Activated CD8-positive, alpha-beta T cell treated with anti-CD3 and anti-CD28 coated beads for 36 hours (primary cell): ENCODE measurements at regions of chr14 and their contacts with region 1.

Region 1: GRCh38 chr14:22852940-22853767 is 16.8 kb downstream of the MMP14 start:
- DNase-seq: peak; percentile 96
- ATAC-seq: peak; percentile 82
- H3K4me3 Mint-ChIP-seq: peak overlapping the region; percentile 71
- H3K27ac Mint-ChIP-seq: peak overlapping the region; percentile 79
- H3K4me1 Mint-ChIP-seq: peaks cover 15% of the 10 kb centered on the region
- H3K27me3 Mint-ChIP-seq: peaks cover 13% of the 10 kb centered on the region
- CTCF ChIP-seq: peak; percentile 92

Region 2: DNA sequence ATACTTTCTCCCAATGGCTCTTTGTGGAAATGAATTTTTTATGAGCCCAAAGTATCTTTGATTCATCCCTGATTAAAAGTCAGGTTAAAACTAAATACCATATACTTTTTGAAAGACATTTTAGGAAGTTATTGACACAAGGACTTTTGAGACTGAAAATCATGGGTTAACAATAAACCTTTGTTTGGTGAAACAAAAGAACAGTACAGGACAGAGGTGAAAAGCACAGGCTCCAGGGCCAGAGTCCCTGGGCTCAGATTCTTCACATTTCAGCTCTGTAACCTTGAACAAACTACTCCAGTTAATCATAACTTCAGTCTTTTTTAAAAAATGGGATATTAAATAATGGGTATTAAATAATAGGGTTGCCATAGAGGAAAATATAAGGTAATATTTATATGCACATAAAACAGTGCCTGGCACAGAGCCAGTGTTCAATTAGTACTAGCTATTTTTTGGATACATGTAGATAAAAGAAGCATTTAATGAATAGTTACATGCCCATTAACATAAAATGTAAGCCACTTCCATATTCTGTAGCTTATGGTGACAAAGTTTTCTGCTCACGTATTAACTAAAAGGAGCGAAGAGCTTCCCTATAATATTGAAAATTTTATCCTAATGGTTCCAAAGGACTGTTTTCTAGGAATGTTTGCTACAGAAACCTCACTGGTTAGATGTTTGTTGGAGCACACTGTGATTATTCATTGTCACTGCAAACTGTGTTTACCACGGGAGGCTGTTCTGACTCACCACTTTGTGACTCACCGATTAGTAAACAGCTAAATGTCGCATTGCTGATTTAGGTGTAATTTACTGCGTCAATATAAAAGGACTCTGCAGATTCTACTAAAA is 519.5 kb before region 1 on chr14:
- CTCF ChIA-PET with region 1: no interaction called
- POLR2A ChIA-PET with region 1: no interaction called
- intact Hi-C with region 1: no loop called
- DNase-seq: no peak
- ATAC-seq: no peak
- H3K4me3 Mint-ChIP-seq: no peak overlapping the region
- H3K27ac Mint-ChIP-seq: no peak overlapping the region
- H3K4me1 Mint-ChIP-seq: no peaks in the 10 kb centered on the region
- H3K27me3 Mint-ChIP-seq: no peaks in the 10 kb centered on the region
- CTCF ChIP-seq: no peak

Region 3: DNA sequence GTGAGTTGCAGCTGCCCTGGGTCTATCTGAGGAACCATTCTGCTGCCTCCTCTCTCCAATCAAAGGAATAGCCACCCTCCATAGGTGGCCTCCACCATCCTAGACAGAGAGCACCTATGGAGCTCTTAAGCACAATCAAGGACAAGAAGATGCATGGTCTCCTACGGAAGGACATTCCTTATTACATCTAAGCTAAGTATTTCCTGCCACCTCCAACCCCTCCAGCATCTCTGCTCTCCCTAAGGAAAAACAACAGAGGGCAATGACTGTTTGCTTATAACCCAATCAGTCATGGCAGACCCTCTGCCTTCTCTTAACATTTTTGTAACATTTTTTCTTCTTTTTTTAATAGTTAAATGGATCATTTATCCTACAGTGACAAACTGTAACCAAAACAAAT is 194.2 kb before region 1 on chr14:
- CTCF ChIA-PET with region 1: interaction called, 10 read pairs
- POLR2A ChIA-PET with region 1: no interaction called
- intact Hi-C with region 1: no loop called
- DNase-seq: no peak
- ATAC-seq: no peak
- H3K4me3 Mint-ChIP-seq: no peak overlapping the region
- H3K27ac Mint-ChIP-seq: no peak overlapping the region
- H3K4me1 Mint-ChIP-seq: no peaks in the 10 kb centered on the region
- H3K27me3 Mint-ChIP-seq: no peaks in the 10 kb centered on the region
- CTCF ChIP-seq: no peak

Region 4: GRCh38 chr14:22822571-22823098 is 30.5 kb before region 1 on chr14:
- CTCF ChIA-PET with region 1: interaction called, 469 read pairs
- POLR2A ChIA-PET with region 1: interaction called, 7 read pairs
- intact Hi-C with region 1: loop called (anchors 1 kb)
- DNase-seq: peak; percentile 78
- ATAC-seq: peak; percentile 83
- H3K4me3 Mint-ChIP-seq: peak overlapping the region; percentile 59
- H3K27ac Mint-ChIP-seq: no peak overlapping the region
- H3K4me1 Mint-ChIP-seq: peaks cover 27% of the 10 kb centered on the region
- H3K27me3 Mint-ChIP-seq: peaks cover 13% of the 10 kb centered on the region
- CTCF ChIP-seq: peak; percentile 95

Region 5: GRCh38 chr14:22836301-22837113 is 16.6 kb before region 1 on chr14 and contains the start of gene MMP14:
- CTCF ChIA-PET with region 1: interaction called, 469 read pairs
- POLR2A ChIA-PET with region 1: interaction called, 4 read pairs
- intact Hi-C with region 1: no loop called
- DNase-seq: no peak
- ATAC-seq: no peak
- H3K4me3 Mint-ChIP-seq: peak within 1 kb of the TSS; percentile 42
- H3K27ac Mint-ChIP-seq: no peak within 1 kb of the TSS
- H3K4me1 Mint-ChIP-seq: peaks cover 10% of the 10 kb centered on the region
- H3K27me3 Mint-ChIP-seq: peaks cover 13% of the 10 kb centered on the region
- CTCF ChIP-seq: no peak
- total RNA-seq, gene MMP14: 1.9 to 3.1 TPM

Region 6: GRCh38 chr14:22900081-22900799 is 47.1 kb after region 1 on chr14:
- CTCF ChIA-PET with region 1: interaction called, 20 read pairs
- POLR2A ChIA-PET with region 1: no interaction called
- intact Hi-C with region 1: no loop called
- DNase-seq: peak; percentile 66
- ATAC-seq: peak; percentile 82
- H3K4me3 Mint-ChIP-seq: no peak overlapping the region
- H3K27ac Mint-ChIP-seq: no peak overlapping the region
- H3K4me1 Mint-ChIP-seq: peaks cover 13% of the 10 kb centered on the region
- H3K27me3 Mint-ChIP-seq: no peaks in the 10 kb centered on the region
- CTCF ChIP-seq: peak; percentile 60

Region 7: GRCh38 chr14:22923749-22924148 is 70.6 kb after region 1 on chr14:
- CTCF ChIA-PET with region 1: no interaction called
- POLR2A ChIA-PET with region 1: no interaction called
- intact Hi-C with region 1: no loop called
- DNase-seq: no peak
- ATAC-seq: no peak
- H3K4me3 Mint-ChIP-seq: no peak overlapping the region
- H3K27ac Mint-ChIP-seq: no peak overlapping the region
- H3K4me1 Mint-ChIP-seq: peaks cover 28% of the 10 kb centered on the region
- H3K27me3 Mint-ChIP-seq: no peaks in the 10 kb centered on the region
- CTCF ChIP-seq: no peak